ENCODE measurements at regions of chr4 and their contacts with region 1.

Region 1: GRCh38 chr4:145609481-145610427 is 9.4 kb upstream of the MMAA start:
- DNase-seq: peak in 8 of 9 donors; percentile 16 to 52 (median 30)
- ATAC-seq: peak; percentile 79
- H3K4me3 ChIP-seq: no peak overlapping the region
- H3K4me3 Mint-ChIP-seq: no peak overlapping the region
- H3K27ac ChIP-seq: no peak overlapping the region
- H3K27ac Mint-ChIP-seq: no peak overlapping the region
- H3K4me1 ChIP-seq: no peaks in the 10 kb centered on the region
- H3K4me1 Mint-ChIP-seq: peaks cover 0 to 6% (median 4%) of the 10 kb centered on the region in 7 donors
- H3K27me3 ChIP-seq: no peaks in the 10 kb centered on the region
- H3K27me3 Mint-ChIP-seq: peaks cover 8 to 22% (median 13%) of the 10 kb centered on the region in 5 donors

Region 2: GRCh38 chr4:144174401-144175067 is 1435.2 kb before region 1 on chr4:
- CTCF ChIA-PET with region 1: interaction called, 3 read pairs
- POLR2A ChIA-PET with region 1: no interaction called
- intact Hi-C with region 1: loop called (anchors 1 to 2 kb)
- DNase-seq: peak in 7 of 9 donors; percentile 10 to 62 (median 45)
- ATAC-seq: peak; percentile 63
- H3K4me3 ChIP-seq: no peak overlapping the region
- H3K4me3 Mint-ChIP-seq: peak overlapping the region in 1 of 10 donors; percentile 44
- H3K27ac ChIP-seq: no peak overlapping the region
- H3K27ac Mint-ChIP-seq: peak overlapping the region in 3 of 9 donors; percentile 25 to 84 (median 41)
- H3K4me1 ChIP-seq: peaks cover 0 to 3% of the 10 kb centered on the region in 2 donors
- H3K4me1 Mint-ChIP-seq: peaks cover 0 to 29% (median 4%) of the 10 kb centered on the region in 7 donors
- H3K27me3 ChIP-seq: no peaks in the 10 kb centered on the region
- H3K27me3 Mint-ChIP-seq: peaks cover 0 to 11% (median 9%) of the 10 kb centered on the region in 5 donors

Region 3: GRCh38 chr4:145154573-145154972 is 455.2 kb before region 1 on chr4:
- CTCF ChIA-PET with region 1: interaction called, 4 read pairs
- POLR2A ChIA-PET with region 1: no interaction called
- intact Hi-C with region 1: loop called in 1 of 2 experiments (anchors 1 kb)
- DNase-seq: peak in 1 of 9 donors; percentile 11
- ATAC-seq: peak; percentile 45
- H3K4me3 ChIP-seq: no peak overlapping the region
- H3K4me3 Mint-ChIP-seq: no peak overlapping the region
- H3K27ac ChIP-seq: no peak overlapping the region
- H3K27ac Mint-ChIP-seq: peak overlapping the region in 1 of 9 donors; percentile 38
- H3K4me1 ChIP-seq: no peaks in the 10 kb centered on the region
- H3K4me1 Mint-ChIP-seq: peaks cover 0 to 26% (median 4%) of the 10 kb centered on the region in 7 donors
- H3K27me3 ChIP-seq: no peaks in the 10 kb centered on the region
- H3K27me3 Mint-ChIP-seq: no peaks in the 10 kb centered on the region

Region 4: DNA sequence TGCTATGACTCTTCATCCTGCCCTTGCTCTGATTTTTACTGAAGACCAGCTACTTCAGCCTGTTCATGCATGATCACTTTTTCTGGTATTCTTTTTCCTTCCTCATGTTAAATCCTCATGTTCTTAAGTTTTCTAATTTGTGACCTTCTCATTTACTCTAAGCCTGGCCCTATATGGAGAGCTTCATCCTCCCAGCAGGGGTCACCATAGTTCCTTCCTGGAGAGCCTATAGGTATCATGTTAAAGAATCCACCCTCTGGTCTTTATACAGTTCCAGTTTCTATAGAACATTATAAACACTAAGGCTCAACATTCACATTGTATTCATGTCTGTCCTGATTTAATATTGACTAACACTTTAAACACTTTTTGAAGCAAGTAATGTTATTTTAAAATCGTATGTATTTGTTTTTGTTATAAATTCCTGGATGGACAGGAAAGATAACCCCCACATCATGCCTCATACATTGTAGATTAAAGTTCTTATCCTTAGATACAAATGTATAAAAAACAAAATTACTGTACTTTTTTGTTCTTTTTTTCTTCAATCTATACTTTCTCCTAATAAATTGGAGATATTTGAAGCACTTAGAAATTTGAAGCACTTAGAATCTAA is 375.6 kb before region 1 on chr4:
- CTCF ChIA-PET with region 1: interaction called, 6 read pairs
- POLR2A ChIA-PET with region 1: no interaction called
- intact Hi-C with region 1: loop called (anchors 1 kb)
- DNase-seq: peak; percentile 7 to 56 (median 46)
- ATAC-seq: peak; percentile 98
- H3K4me3 ChIP-seq: no peak overlapping the region
- H3K4me3 Mint-ChIP-seq: no peak overlapping the region
- H3K27ac ChIP-seq: no peak overlapping the region
- H3K27ac Mint-ChIP-seq: no peak overlapping the region
- H3K4me1 ChIP-seq: no peaks in the 10 kb centered on the region
- H3K4me1 Mint-ChIP-seq: no peaks in the 10 kb centered on the region
- H3K27me3 ChIP-seq: no peaks in the 10 kb centered on the region
- H3K27me3 Mint-ChIP-seq: peaks cover 0 to 16% (median 0%) of the 10 kb centered on the region in 5 donors

Region 5: DNA sequence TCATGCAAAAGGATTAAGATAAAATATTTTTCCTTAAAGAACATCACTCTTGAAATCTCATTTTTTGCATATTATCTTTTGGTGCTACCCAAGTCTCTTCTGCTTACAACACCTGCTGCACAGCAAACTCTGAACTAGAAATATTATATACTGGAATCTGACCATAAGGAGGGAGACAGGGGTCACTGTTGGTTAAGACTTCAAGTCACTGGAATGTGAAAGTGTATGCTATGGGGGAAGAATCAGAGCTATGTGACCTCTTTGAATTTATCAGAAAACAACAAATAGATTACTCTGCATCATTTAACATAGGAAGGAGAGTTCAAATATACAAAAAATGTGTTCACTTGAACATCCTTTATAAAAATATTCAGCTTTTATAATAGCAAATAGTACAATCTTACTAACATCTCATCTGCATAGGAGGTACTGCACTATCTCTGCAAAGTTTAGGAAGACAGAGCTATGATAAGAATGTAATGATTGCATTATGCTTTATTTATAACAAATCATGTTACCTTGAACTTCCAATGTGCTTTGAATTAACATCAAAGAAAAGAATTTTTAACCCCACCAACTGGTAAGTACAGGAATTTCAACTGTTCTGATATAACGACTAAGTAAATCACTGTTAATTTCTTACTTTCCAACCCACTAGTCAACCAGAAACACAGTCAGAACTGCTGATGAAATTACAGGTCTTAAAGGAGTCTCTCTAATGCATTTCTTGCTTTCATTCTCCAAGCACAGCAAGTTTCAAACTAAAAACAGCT is 259.1 kb after region 1 on chr4:
- CTCF ChIA-PET with region 1: no interaction called
- POLR2A ChIA-PET with region 1: no interaction called
- intact Hi-C with region 1: no loop called
- DNase-seq: peak in 3 of 9 donors; percentile 1 to 10 (median 7)
- ATAC-seq: no peak
- H3K4me3 ChIP-seq: no peak overlapping the region
- H3K4me3 Mint-ChIP-seq: no peak overlapping the region
- H3K27ac ChIP-seq: no peak overlapping the region
- H3K27ac Mint-ChIP-seq: no peak overlapping the region
- H3K4me1 ChIP-seq: no peaks in the 10 kb centered on the region
- H3K4me1 Mint-ChIP-seq: peaks cover 4 to 25% (median 15%) of the 10 kb centered on the region in 7 donors
- H3K27me3 ChIP-seq: no peaks in the 10 kb centered on the region
- H3K27me3 Mint-ChIP-seq: no peaks in the 10 kb centered on the region

Measured in naive thymus-derived CD4-positive, alpha-beta T cell (primary cell).